ENCODE measurements at regions of chr11 and their contacts with region 1.

Region 1: DNA sequence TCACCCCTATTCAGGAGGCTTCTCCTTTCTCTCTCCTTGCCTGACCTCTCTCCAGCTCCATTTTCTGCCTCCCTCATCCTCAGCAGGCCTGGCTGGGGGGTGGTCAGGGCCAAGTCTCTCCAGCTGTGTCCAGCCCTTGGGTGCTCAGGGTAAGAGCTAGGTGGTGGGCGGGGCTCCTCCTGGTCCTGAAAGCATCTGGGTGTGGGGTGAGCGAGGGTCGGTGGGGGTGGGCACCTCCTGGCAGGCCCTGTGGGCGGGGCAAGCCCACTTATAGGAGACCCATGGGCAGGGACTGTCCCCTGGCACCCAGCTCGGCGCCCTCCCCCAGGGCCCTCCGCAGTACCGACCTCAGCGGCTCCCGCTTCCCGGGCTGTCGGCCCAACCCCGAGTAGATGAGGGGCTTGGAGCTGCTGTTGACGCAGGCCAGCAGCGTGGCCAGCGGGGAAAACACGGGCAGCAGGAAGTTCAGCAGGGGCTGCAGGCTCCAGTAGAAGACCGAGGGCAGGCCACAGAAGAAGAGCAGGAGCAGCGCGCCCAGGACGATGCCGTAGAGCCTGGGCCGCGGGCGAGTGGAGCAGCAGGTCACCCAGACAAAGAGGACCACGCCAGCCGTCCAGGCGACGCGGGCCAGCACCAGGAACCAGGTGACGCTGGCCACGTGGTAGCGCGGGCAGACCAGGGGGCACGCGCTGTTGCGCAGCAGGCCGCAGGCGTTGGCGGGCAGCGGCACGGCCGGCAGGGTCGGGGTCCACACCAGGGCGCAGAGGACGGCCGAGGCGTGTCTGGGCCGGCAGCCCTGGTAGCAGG is 734 bp downstream of the MRGPRG start:
- DNase-seq: peak; percentile 11
- H3K4me3 ChIP-seq: no peak overlapping the region
- H3K27ac ChIP-seq: no peak overlapping the region
- H3K4me1 ChIP-seq: peaks cover 5% of the 10 kb centered on the region
- H3K27me3 ChIP-seq: peaks cover 93% of the 10 kb centered on the region
- CTCF ChIP-seq: no peak

Region 2: DNA sequence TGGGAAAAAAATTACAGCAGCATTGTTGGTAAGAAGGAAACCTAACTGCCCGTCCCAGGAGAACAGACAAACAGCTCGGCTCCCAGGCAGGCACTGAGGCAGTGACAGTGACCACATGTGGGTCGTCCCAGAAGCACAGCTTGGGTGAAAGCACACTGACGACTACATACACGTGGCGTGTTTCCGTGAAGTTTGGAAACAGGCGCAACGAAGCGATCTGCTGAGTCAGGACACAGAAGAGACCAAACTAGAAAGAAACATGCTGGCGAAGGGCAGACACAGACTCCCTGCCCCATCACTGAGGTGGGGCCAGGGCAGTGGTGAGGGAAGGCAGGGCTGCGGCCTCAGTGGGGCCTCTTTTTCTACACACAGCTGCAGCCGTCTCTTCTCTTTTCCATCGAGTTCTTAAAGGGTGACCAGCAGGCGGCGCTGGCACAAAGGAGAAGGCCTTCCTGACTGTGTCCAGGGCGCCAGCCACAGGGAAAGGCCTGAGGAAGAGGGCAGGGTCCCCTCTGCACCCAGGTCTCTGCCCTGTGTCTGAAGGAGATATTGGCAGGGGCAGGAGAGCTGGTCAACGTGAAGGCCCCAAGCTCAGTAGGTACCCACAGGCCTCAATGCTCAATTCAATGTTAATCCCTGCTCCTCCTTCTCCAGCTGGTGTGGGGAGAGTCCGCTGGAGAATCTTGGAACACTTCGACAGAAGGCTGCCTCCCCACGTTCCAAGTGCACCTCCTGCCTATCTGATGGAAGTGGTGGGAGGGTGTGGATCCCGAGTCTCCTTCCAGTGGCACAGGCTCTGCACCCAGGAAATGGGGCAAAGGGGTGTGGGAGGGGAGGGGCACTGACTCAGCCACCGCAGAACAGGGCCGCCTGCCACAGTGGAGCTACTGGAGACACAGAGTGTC is 180.6 kb before region 1 on chr11:
- intact Hi-C with region 1: loop called (anchors 10 kb)
- DNase-seq: peak; percentile 80
- H3K4me3 ChIP-seq: no peak overlapping the region
- H3K27ac ChIP-seq: peak overlapping the region; percentile 26
- H3K4me1 ChIP-seq: peaks cover 33% of the 10 kb centered on the region
- H3K27me3 ChIP-seq: no peaks in the 10 kb centered on the region
- CTCF ChIP-seq: peak; percentile 86

Region 3: DNA sequence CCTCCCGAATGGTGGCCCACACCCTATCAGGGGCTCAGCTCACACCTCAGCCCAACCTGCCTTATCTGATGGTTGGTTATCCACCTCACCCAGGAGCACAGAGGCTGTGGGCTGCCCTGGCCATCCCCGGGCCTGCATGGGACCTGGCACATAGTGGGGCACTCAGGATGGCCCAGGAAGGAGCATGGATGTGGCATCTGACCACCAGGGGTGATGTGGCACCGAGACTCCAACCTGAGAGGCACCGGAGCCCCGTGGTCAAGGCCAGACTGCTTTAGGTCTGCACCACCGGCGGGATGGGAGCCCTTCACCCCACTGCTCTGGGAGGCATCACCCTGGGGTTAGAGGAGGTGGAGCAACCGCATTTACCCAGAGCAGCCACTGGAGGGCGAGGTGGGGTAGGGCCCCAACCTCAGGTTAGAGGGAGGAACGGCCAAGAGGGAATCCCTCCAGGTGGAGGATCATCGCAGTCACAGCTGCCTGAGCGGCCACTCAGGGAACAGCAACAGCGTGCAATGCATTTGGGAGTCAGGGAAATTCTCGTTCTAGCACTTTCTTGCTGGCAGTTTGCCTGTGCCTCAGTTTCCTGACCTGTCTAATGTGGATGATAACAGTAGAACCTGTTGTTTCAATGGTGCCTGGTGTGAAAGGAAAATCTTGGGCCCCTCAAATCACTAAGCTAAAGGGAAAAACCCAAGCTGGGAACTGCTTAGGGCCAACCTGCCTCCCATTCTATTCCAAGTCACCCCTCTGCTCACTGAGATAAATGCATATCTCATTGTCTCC is 107.8 kb before region 1 on chr11:
- intact Hi-C with region 1: loop called (anchors 10 kb)
- DNase-seq: no peak
- H3K4me3 ChIP-seq: no peak overlapping the region
- H3K27ac ChIP-seq: no peak overlapping the region
- H3K4me1 ChIP-seq: no peaks in the 10 kb centered on the region
- H3K27me3 ChIP-seq: no peaks in the 10 kb centered on the region
- CTCF ChIP-seq: peak; percentile 79

Region 4: DNA sequence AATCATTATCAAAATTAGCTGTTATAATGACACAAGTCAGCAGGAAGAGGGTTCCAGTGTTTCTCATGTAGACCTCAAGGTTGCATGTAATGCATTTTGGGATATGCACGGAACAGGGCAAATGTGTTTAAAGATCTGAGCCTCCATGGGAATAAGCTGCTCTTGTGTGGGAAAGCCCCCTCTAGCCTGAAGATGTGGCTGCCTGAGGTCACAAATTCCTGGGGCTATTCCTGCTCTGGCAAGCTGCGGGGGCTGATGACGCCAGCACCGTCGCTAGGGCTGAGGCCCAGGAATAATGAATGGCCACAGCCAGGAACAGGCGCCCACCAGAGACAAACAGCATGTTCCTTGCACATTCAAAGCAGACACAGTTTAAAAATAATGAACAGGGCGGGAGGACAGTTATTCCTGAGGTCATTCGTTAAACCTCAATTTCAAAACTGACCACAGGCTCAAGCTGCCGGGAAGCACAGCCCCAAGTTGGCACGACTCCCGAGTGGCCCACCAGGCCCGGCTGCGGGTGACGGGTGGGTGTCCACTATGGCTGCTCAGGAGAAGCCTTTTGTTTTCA is 64.5 kb before region 1 on chr11:
- intact Hi-C with region 1: loop called (anchors 10 kb)
- DNase-seq: peak; percentile 74
- H3K4me3 ChIP-seq: peak overlapping the region; percentile 17
- H3K27ac ChIP-seq: peak overlapping the region; percentile 78
- H3K4me1 ChIP-seq: peaks cover 98% of the 10 kb centered on the region
- H3K27me3 ChIP-seq: no peaks in the 10 kb centered on the region
- CTCF ChIP-seq: no peak

Region 5: GRCh38 chr11:3195251-3196160 is 22.4 kb before region 1 on chr11:
- intact Hi-C with region 1: no loop called
- DNase-seq: no peak
- H3K4me3 ChIP-seq: no peak overlapping the region
- H3K27ac ChIP-seq: no peak overlapping the region
- H3K4me1 ChIP-seq: peaks cover 10% of the 10 kb centered on the region
- H3K27me3 ChIP-seq: peaks cover 35% of the 10 kb centered on the region
- CTCF ChIP-seq: peak; percentile 59

Measured in left ventricle myocardium inferior (tissue), 1 donor.